K562 (cell line): ENCODE measurements at regions of chr2 and their contacts with region 1.

Region 1: GRCh38 chr2:84811839-84812431 is 68.9 kb downstream of the TRABD2A start:
- DNase-seq: no peak
- ATAC-seq: no peak
- H3K4me3 ChIP-seq: no peak overlapping the region
- H3K27ac ChIP-seq: no peak overlapping the region
- H3K4me1 ChIP-seq: peaks cover 0 to 2% of the 10 kb centered on the region in 2 experiments; a peak in 2 of 5 replicates
- H3K27me3 ChIP-seq: peaks cover 5 to 14% of the 10 kb centered on the region in 2 experiments; a peak in 3 of 5 replicates
- CTCF ChIP-seq: no peak
- EP300 ChIP-seq: no peak
- POLR2A ChIP-seq: no peak
- RAD21 ChIP-seq: no peak

Region 2: DNA sequence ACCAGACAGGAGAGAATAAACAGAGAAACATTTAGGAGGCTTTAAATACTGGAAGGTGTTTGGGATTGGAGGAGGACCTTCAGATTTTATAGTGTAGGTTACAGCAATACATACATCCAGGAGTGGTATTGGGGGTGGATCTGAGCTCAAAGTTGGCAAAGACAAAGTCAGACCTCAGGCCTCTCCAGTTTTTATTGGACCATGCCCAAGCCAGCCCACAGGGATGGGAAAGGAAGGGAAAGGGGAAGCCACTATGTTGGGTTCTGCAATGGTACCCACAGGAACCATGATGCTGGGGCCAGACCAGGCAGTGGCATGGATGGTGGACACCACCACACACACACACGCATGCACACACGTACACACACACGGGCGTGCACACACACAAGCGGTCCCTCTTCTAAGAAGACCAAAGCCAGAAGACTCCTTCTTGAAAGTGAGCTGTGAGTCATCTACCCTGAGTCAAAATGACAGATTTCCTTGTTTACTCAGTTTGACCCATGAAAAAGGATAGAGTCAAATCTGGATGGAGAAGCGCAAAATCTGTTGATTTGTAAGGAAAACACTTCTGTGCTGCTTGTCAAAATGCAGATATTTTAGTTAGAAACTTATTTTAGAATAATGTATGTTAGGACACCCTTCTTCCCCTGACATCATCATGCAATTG is 18.9 kb before region 1 on chr2:
- CTCF ChIA-PET with region 1: no interaction called
- POLR2A ChIA-PET with region 1: no interaction called
- in situ Hi-C with region 1: no loop called
- intact Hi-C with region 1: loop called (anchors 2 kb)
- DNase-seq: no peak
- ATAC-seq: no peak
- H3K4me3 ChIP-seq: no peak overlapping the region
- H3K27ac ChIP-seq: no peak overlapping the region
- H3K4me1 ChIP-seq: no peaks in the 10 kb centered on the region
- H3K27me3 ChIP-seq: peaks cover 0 to 5% of the 10 kb centered on the region in 2 experiments; a peak in 1 of 5 replicates
- CTCF ChIP-seq: no peak
- EP300 ChIP-seq: no peak
- POLR2A ChIP-seq: no peak
- RAD21 ChIP-seq: no peak

Region 3: DNA sequence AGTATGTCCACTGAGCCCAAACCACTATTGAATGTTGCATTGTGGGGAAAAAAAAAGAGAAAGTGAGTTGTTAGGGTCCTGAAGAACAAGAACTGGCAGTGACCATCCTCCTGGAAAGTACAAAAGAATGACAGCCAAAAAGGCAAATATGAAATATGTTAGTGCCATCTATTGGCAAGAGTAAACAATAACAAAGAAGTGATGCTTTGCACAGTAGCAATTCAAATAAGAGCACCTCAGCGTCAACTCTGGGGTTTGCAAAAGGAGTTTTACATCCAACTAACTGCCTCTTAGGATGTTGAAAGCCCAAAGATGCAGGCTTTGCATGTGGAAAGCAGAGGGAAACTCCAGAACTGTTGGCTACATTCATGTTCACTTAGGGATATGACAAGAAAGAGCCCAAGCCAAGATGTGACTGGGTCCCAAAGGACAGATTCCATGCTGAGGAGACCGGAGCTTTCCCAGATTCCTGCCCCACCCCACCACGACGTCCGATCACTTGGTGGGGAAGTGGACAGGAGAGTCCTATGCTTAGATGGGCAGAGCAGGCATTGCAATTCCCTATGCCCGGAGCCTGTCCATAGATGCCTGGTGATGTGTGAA is 53.3 kb after region 1 on chr2:
- CTCF ChIA-PET with region 1: no interaction called
- POLR2A ChIA-PET with region 1: no interaction called
- in situ Hi-C with region 1: no loop called
- intact Hi-C with region 1: loop called (anchors 5 kb)
- DNase-seq: no peak
- ATAC-seq: peak; percentile 72
- H3K4me3 ChIP-seq: no peak overlapping the region
- H3K27ac ChIP-seq: no peak overlapping the region
- H3K4me1 ChIP-seq: no peaks in the 10 kb centered on the region
- H3K27me3 ChIP-seq: peaks cover 14 to 36% of the 10 kb centered on the region in 2 experiments
- CTCF ChIP-seq: peak; percentile 29 to 64 (median 54); a peak in 5 of 6 replicates
- EP300 ChIP-seq: no peak
- POLR2A ChIP-seq: no peak
- RAD21 ChIP-seq: peak; percentile 68 to 76

Region 4: DNA sequence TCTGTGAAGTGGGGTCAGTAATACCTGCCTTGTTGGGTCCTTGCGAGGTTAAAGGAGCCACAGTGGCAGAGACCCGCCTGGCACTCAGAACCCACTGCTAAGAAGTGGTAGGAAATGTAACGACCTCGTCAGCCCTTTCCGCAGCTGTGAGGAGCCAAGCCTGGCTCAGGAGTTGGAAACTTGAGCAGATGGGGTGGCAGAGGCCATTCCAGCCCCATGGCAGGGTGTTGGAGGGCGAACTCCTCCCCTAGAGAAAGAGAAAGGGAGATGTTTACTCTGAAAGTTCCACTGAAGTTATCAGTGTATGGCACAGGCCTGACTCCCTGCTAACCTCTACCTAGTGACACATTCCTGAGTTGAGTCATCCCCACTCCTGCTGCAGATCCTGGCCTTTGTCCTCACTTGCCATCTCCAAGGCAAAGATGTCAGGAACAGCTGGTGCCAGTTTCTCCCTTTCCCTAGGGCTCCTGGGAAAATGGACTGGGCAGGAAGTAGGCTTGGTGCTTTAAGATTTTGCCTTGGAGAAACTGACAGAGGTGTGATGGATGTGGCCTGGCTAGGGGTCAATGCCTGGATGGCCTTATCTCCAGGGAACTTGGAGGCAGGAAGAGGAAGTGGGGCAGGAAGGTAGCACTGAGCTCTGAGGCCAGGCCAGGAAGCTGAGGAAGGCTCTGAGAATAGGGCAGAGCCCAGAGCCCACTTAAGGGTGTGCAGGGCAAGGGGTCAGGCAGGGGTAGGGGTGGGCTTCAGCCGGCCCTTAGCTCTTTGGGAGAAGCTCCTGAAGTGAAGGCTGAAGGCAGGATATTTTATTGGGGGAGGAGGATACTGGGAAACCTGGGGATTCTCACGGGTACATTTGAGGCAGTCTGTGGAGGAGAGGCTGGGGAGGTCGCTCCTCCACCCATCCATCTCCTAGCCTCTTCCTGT is 773.2 kb after region 1 on chr2:
- CTCF ChIA-PET with region 1: no interaction called
- POLR2A ChIA-PET with region 1: no interaction called
- in situ Hi-C with region 1: no loop called
- intact Hi-C with region 1: no loop called
- DNase-seq: peak; percentile 57 to 75 (median 68)
- ATAC-seq: peak; percentile 72
- H3K4me3 ChIP-seq: no peak overlapping the region
- H3K27ac ChIP-seq: peak overlapping the region; percentile 81
- H3K4me1 ChIP-seq: peaks cover 36 to 45% of the 10 kb centered on the region in 2 experiments
- H3K27me3 ChIP-seq: no peaks in the 10 kb centered on the region
- CTCF ChIP-seq: no peak
- EP300 ChIP-seq: peak; percentile 73
- POLR2A ChIP-seq: 0 out of 2 replicates have a peak, but pooled peaks have one; percentile 37
- RAD21 ChIP-seq: no peak